Posterior cingulate gyrus (tissue), 11 donors: ENCODE measurements at regions of chr6 and their contacts with region 1.

Region 1: DNA sequence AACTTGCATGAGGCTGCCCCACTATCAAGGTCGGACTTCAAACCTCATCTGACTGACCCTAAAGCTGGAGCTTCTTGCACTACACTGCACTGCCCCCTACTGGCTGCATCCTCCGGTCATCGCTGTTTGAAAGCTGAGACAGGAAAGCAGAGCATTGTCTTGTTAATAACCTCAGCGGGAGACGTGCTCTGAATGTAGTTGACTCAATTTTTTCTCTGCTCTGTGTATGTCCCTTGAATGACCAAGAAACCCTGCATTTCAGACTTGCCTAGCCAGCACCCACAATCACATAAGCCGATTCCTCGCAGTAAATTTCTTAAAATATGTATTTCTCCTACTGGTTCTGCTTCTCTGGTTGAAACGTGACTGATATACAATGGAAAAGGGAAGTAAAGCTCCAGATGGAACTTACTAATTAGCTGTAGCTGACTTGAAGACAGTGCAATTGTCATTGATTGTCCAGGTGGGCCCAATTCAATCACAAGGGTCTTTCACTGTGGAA is 27.8 kb downstream of the TCF21 start:
- DNase-seq: peak; percentile 74 to 98 (median 93)

Region 2: GRCh38 chr6:133568970-133569889 is 347.5 kb before region 1 on chr6:
- intact Hi-C with region 1: loop called (anchors 1 kb)
- DNase-seq: peak in 1 of 10 donors; percentile 73

Region 3: DNA sequence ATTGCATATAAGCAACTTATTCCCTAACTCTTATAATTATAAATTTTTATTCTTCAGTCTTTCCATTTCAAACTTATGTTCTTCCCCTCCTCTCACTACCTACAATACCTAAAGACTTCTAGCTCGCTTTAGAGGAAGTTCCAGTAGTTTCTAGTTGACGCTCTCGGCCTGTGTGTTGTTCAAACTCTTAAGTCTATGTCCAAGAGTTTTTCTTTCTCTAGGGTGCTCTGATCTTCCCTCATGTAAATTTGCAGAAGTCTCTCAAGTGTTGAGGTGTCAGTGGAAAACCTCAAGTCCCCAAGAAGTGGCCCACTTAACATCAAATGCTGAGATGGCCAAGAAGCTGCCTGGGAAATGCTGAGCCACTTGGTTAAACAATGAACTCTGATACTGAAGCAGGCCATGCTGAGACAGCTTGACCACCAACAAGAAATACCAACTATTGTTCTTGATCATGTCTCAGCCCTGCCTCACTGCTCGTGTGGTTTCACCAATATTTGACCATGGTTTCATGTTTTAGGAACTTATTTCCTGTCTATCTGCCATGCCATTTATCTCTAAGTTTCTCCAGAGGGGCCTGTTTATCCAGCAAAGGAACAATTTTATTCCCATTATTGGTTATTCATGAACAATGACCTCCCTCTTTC is 128.7 kb before region 1 on chr6:
- intact Hi-C with region 1: no loop called
- DNase-seq: no peak